GM10248 (cell line): ENCODE measurements at regions of chr14 and their contacts with region 1.

Region 1: DNA sequence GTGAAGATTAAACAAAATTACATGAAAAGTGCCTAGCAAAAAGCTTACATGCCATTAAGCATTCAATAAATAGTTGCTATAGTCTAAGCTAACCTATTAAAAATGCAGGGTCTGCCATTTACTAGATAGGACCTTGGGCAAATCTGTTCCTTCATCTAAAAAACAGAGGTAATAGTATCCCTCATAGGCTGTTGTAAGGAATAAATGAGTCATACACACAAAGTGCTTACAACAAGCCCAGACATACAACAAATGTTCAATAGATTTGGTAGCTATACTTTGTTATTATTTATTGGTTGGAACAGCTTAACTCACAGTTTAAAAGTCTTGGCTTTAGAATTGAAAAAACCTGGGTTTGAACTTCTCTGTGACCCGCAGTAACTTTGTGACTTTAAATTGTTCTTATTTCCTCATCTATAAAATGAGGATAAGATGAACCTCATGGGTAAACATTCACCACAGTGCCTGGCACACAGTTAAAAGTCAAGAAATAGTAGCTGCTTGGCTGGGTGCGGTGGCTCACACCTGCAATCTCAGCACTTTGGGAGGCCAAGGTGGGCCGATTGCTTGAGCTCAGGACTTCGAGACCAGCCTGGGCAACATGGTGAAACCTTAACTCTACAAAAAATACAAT is 24.7 kb downstream of the HEATR5A start:
- DNase-seq: no peak
- CTCF ChIP-seq: no peak

Region 2: DNA sequence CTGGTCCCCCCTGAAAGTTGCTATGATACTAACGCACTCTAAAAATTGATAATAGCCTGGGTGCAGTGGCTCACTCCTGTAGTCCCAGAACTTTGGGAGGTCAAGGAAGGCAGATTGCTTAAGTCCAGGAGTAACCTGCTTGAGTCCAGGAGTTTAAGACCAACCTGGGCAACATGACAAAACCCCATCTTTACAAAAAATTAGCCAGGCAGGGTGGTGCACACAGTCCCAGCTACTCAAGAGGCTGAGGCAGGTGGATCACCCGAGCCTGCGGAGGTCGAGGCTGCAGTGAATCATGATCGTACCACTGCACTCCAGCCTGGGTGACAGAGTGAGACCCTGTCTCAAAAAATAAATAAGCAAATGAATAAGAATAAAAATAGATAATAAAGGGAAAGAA is 18.3 kb before region 1 on chr14:
- CTCF ChIA-PET with region 1: interaction called, 10 read pairs
- POLR2A ChIA-PET with region 1: no interaction called
- DNase-seq: no peak
- CTCF ChIP-seq: no peak